ENCODE measurements at regions of chr12 and their contacts with region 1.

Region 1: GRCh38 chr12:31959161-31959700 is at the start of gene RESF1:
- DNase-seq: peak; percentile 91
- ATAC-seq: peak; percentile 83
- H3K4me3 Mint-ChIP-seq: peak within 1 kb of the TSS; percentile 96
- H3K27ac Mint-ChIP-seq: peak within 1 kb of the TSS; percentile 98
- H3K4me1 Mint-ChIP-seq: peaks cover 67% of the 10 kb centered on the region
- H3K27me3 Mint-ChIP-seq: no peaks in the 10 kb centered on the region
- total RNA-seq, gene RESF1: 110 to 137 TPM

Region 2: GRCh38 chr12:31728917-31729640 is 230.2 kb before region 1 on chr12 and contains the start of gene AMN1:
- CTCF ChIA-PET with region 1: interaction called, 15 read pairs
- DNase-seq: peak; percentile 100
- ATAC-seq: peak; percentile 94
- H3K4me3 Mint-ChIP-seq: peak within 1 kb of the TSS; percentile 95
- H3K27ac Mint-ChIP-seq: peak within 1 kb of the TSS; percentile 99
- H3K4me1 Mint-ChIP-seq: peaks cover 45% of the 10 kb centered on the region
- H3K27me3 Mint-ChIP-seq: peaks cover 4% of the 10 kb centered on the region
- total RNA-seq, gene AMN1: 3.1 to 3.9 TPM

Region 3: GRCh38 chr12:31890295-31891285 is 68.6 kb before region 1 on chr12:
- CTCF ChIA-PET with region 1: interaction called, 12 read pairs
- DNase-seq: peak; percentile 44
- ATAC-seq: peak; percentile 81
- H3K4me3 Mint-ChIP-seq: no peak overlapping the region
- H3K27ac Mint-ChIP-seq: peak overlapping the region; percentile 91
- H3K4me1 Mint-ChIP-seq: peaks cover 48% of the 10 kb centered on the region
- H3K27me3 Mint-ChIP-seq: no peaks in the 10 kb centered on the region

Measured in activated CD8-positive, alpha-beta memory T cell treated with anti-CD3 and anti-CD28 coated beads, Interleukin-2, amount 10 ng/mL, durations not matched to agents 7 days and 5 days (primary cell).